ENCODE measurements at regions of chr16 and their contacts with region 1.

Region 1: GRCh38 chr16:68264128-68265077 is at the start of gene SLC7A6:
- DNase-seq: peak; percentile 62
- H3K27ac ChIP-seq: peak within 1 kb of the TSS; percentile 98
- CTCF ChIP-seq: peak; percentile 75

Region 2: GRCh38 chr16:68179196-68179795 is 85.1 kb before region 1 on chr16:
- CTCF ChIA-PET with region 1: no interaction called
- POLR2A ChIA-PET with region 1: no interaction called
- DNase-seq: no peak
- H3K27ac ChIP-seq: no peak overlapping the region
- CTCF ChIP-seq: no peak

Region 3: GRCh38 chr16:68287276-68288251 is 23.2 kb after region 1 on chr16:
- CTCF ChIA-PET with region 1: interaction called, 12 read pairs
- POLR2A ChIA-PET with region 1: interaction called, 13 read pairs
- DNase-seq: peak; percentile 62
- H3K27ac ChIP-seq: peak overlapping the region; percentile 65
- CTCF ChIP-seq: no peak